Activated CD8-positive, alpha-beta T cell treated with anti-CD3 and anti-CD28 coated beads, Interleukin-2, amount 10 ng/mL, durations not matched to agents 7 days and 5 days (primary cell): ENCODE measurements at regions of chr11 and their contacts with region 1.

Region 1: DNA sequence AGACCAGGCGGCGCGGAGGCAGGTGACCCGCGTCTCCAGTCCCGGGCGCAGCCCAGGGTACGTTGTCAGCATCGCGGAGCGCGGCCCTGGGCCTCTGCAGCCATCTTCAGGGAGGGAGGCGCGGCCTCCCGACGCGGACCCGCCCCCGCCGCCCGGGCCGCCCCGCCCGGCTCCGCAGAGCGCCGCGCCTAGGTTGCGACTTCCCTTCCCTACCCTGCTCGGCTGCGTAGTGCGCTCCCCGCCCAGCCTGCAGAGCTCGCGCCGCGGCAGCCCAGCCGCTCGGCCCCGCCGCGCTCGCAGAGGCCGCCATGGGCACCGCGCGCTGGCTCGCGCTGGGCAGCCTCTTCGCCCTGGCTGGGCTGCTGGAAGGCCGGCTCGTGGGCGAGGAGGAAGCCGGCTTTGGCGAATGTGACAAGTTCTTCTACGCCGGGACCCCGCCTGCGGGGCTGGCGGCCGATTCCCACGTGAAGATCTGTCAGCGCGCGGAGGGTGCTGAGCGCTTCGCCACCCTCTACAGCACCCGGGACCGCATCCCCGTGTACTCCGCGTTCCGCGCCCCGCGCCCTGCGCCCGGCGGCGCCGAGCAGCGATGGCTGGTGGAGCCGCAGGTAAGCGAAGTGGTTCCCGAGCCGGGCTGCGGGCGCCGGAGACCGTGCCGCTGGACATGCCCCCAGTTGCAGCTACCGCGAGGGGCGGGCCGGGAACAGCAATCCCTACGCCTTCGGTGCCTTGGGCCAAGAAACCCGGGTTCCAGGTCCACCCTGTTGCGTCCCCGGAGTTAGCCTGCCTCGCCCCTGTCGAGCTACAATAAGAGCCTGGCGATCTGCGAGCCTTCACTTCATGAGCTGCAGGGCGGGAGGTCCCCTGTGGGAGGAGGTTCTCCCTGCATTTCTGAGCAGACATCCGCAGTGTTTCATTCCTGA is at the start of gene ENDOD1:
- DNase-seq: peak; percentile 88
- ATAC-seq: peak; percentile 96
- H3K4me3 Mint-ChIP-seq: peak within 1 kb of the TSS; percentile 90
- H3K27ac Mint-ChIP-seq: peak within 1 kb of the TSS; percentile 99
- H3K4me1 Mint-ChIP-seq: peaks cover 66% of the 10 kb centered on the region
- H3K27me3 Mint-ChIP-seq: no peaks in the 10 kb centered on the region
- total RNA-seq, gene ENDOD1: 23.4 to 23.9 TPM

Region 2: DNA sequence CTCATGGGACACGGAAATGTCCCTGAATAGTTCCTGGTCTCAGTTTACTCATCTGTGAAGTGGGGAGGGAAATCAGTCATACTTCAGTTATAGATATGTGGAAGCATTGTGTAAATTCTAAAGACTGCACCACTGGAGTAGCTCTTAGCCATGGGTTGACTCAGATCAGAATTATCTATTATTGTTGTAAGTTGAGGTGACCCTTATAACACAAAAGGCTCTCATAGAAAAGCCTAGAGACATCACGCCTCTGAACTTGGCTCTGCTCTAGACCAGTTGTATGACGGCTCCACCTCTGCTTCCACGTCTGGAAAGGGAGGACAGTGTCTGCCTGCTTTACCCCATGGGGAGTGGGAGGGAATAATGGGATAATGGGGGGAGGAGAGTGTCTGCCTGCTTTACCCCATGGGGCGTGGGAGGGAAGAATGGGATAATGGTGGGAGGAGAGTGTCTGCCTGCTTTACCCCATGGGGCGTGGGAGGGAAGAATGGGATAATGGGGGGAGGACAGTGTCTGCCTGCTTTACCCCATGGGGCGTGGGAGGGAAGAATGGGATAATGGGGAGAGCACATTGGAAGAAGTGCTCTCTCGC is 223.6 kb before region 1 on chr11:
- CTCF ChIA-PET with region 1: no interaction called
- POLR2A ChIA-PET with region 1: no interaction called
- DNase-seq: no peak
- ATAC-seq: no peak
- H3K4me3 Mint-ChIP-seq: no peak overlapping the region
- H3K27ac Mint-ChIP-seq: no peak overlapping the region
- H3K4me1 Mint-ChIP-seq: no peaks in the 10 kb centered on the region
- H3K27me3 Mint-ChIP-seq: no peaks in the 10 kb centered on the region

Region 3: GRCh38 chr11:95050595-95051202 is 39.2 kb before region 1 on chr11:
- CTCF ChIA-PET with region 1: no interaction called
- POLR2A ChIA-PET with region 1: no interaction called
- DNase-seq: peak; percentile 19
- ATAC-seq: no peak
- H3K4me3 Mint-ChIP-seq: no peak overlapping the region
- H3K27ac Mint-ChIP-seq: no peak overlapping the region
- H3K4me1 Mint-ChIP-seq: no peaks in the 10 kb centered on the region
- H3K27me3 Mint-ChIP-seq: peaks cover 37% of the 10 kb centered on the region

Region 4: DNA sequence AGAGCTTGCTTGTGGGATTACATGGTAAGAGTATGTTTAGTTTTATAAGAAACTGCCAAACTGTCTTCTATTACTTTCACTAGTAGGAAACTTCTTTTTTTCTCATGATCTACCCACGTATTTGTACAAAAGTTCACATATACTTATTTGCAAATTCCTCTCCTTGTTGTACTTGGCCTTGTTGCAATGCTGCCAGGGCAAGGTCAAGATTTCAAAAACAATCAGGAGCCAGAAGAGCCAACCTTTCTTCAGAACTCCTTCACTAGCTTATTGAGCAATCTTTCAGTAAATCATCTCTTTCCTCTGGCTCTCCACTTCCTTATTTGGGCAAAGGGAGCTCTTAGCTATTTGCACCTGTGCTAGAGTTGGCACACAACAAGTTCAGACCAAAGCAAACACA is 13.5 kb before region 1 on chr11:
- CTCF ChIA-PET with region 1: interaction called, 233 read pairs
- POLR2A ChIA-PET with region 1: interaction called, 103 read pairs
- DNase-seq: peak; percentile 9
- ATAC-seq: no peak
- H3K4me3 Mint-ChIP-seq: no peak overlapping the region
- H3K27ac Mint-ChIP-seq: no peak overlapping the region
- H3K4me1 Mint-ChIP-seq: peaks cover 14% of the 10 kb centered on the region
- H3K27me3 Mint-ChIP-seq: peaks cover 4% of the 10 kb centered on the region

Region 5: DNA sequence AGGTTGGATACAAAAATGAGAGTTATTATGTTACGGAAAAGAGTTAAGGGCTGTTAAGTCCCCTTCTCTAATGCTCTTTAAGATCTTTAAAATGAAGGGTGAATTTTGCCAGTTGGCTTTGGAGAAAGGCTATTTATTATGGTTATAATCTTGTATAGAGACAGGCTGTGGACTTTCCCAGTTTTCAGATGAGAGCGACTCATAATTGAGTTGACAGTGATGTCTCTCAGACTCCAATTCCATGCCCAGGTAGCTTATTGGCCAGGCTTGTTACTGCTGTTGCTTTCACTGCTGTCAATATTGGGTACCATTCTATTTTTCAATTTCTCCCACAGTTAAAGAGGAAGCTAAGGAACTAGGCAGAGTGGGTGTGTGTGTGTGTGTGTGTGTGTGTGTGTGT is 12.9 kb after region 1 on chr11:
- CTCF ChIA-PET with region 1: interaction called, 33 read pairs
- POLR2A ChIA-PET with region 1: interaction called, 12 read pairs
- DNase-seq: no peak
- ATAC-seq: no peak
- H3K4me3 Mint-ChIP-seq: no peak overlapping the region
- H3K27ac Mint-ChIP-seq: no peak overlapping the region
- H3K4me1 Mint-ChIP-seq: peaks cover 32% of the 10 kb centered on the region
- H3K27me3 Mint-ChIP-seq: no peaks in the 10 kb centered on the region

Region 6: GRCh38 chr11:95138448-95138847 is 48.6 kb after region 1 on chr11:
- CTCF ChIA-PET with region 1: interaction called, 11 read pairs
- POLR2A ChIA-PET with region 1: interaction called, 10 read pairs
- DNase-seq: no peak
- ATAC-seq: peak; percentile 74
- H3K4me3 Mint-ChIP-seq: no peak overlapping the region
- H3K27ac Mint-ChIP-seq: no peak overlapping the region
- H3K4me1 Mint-ChIP-seq: peaks cover 14% of the 10 kb centered on the region
- H3K27me3 Mint-ChIP-seq: peaks cover 13% of the 10 kb centered on the region

Region 7: GRCh38 chr11:95790123-95790932 is 700.4 kb after region 1 on chr11 and contains the start of gene CEP57:
- CTCF ChIA-PET with region 1: no interaction called
- POLR2A ChIA-PET with region 1: interaction called, 22 read pairs
- DNase-seq: peak; percentile 97
- ATAC-seq: peak; percentile 69
- H3K4me3 Mint-ChIP-seq: peak within 1 kb of the TSS; percentile 99
- H3K27ac Mint-ChIP-seq: peak within 1 kb of the TSS; percentile 100
- H3K4me1 Mint-ChIP-seq: peaks cover 55% of the 10 kb centered on the region
- H3K27me3 Mint-ChIP-seq: no peaks in the 10 kb centered on the region
- total RNA-seq, gene CEP57: 85.4 to 86.6 TPM